Right ventricle myocardium inferior (tissue), 1 donor: ENCODE measurements at regions of chr16 and their contacts with region 1.

Region 1: DNA sequence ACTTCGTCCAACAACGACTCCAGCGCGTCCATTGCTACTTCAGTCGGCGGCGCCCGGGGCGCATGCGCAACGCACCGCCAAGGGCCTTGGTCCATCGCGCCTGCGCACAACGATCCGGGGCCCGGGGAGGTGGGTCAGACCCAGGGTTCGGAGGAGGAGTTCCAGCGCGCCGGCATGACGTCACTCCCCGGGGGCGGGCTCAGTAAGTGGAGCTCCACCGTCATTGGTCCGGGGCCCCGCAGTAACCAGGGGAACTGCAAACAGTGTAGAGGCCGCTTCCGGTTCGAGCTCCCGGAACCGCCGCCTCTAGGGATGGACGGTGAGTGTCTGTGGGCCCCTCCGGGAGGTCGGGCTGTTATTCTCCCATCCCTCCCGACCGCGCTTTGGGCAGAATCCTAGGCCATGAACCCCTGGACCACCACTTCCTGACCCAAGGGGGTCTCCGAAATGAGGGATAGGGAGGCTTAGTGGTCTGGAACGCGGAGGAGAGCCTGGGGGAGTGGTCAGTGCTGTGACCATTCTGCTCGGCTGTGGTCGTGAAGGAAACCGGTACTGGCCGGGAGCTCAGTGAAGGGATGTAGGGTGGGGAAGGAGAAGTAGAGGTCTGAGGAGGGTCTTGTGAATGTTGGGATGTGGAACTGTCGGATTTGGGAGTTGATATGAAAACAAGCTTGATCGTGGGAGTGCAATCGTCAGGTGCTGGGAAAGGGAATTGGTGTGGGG is at the starts of genes GTF3C1 and KATNIP:
- DNase-seq: peak; percentile 100
- ATAC-seq: peak; percentile 99
- total RNA-seq, gene GTF3C1: 45.1 TPM
- total RNA-seq, gene KATNIP: 8.0 TPM

Region 2: DNA sequence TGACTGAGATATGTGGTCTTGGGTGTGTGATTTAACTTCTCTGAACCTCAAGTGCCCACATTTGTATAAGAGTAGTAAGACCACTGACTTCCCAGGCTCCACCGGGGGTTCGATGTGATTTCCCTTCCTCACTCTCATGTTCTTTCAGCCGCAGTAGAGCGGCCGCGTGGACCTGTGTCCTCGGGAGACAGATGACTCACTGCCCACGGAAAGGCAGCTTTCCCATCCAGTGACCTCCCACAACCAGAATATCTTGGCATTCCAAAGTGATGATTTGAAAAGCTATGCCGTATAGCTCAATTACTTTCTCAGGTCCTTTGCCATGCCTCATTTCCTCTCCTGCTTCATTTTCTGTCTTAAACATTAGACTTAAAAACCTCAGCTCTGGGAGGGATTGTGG is 74.5 kb before region 1 on chr16:
- intact Hi-C with region 1: no loop called
- DNase-seq: peak; percentile 50
- ATAC-seq: no peak

Region 3: DNA sequence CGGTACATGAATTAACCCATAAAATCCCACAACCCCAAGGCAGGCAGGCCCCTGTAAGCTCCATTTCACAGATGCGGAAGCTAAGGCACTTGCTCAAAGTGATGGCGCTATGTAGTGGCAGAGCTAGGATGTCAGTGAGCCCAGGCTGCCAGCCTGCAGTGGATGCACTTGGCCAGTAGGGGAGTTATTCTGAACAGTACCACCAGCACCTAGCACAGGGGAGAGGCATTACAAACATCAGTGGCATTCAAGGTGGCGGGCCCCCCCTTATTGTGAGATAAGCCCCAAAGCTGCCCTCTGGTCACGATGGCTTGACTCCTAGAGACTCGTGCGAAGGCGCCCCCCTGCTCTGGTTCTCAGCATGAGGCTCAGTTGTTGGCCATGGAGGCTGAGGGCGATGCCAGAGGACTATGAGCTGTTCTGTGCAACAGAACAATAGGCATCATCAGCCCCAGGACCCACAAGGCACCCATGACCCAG is 34.1 kb before region 1 on chr16:
- intact Hi-C with region 1: loop called (anchors 5 kb)
- DNase-seq: no peak
- ATAC-seq: peak; percentile 36

Region 4: GRCh38 chr16:27737513-27737912 is 187.5 kb after region 1 on chr16:
- intact Hi-C with region 1: no loop called
- DNase-seq: no peak
- ATAC-seq: no peak